HEK293 (cell line): ENCODE measurements at regions of chr6 and their contacts with region 1.

Region 1: DNA sequence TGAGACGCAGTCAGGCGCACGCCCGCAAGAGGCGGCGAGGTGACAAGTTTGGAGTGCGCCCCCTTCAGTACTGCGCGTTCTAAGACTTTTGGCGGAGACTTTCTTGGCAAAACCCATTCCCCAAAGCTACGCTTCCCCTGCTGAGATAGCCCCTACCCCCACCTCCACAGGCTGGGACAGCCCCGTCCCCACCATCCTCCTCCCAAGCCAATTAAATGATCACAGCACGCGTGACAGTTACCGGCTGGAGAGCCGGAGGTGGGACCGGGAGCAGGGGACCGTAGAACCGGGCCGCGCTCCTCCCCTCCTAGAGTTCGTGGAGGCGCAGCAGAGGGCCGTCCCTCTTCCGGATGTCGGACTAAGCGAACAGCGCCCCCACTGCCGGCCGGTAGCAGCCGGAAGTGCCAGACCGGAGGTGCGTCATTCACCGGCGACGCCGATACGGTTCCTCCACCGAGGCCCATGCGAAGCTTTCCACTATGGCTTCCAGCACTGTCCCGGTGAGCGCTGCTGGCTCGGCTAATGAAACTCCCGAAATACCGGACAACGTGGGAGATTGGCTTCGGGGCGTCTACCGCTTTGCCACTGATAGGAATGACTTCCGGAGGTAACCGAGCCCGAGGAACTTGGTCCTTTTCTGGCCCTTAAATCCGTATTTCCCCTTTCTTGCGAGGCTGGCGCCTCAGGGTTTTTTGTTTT is at the start of gene TOMM6:
- H3K4me3 ChIP-seq: peak within 1 kb of the TSS; percentile 67
- H3K27ac ChIP-seq: peak within 1 kb of the TSS; percentile 67
- H3K4me1 ChIP-seq: no peaks in the 10 kb centered on the region; the same call in 1 of the 2 replicates
- CTCF ChIP-seq: peak; percentile 98

Region 2: GRCh38 chr6:41602864-41603608 is 184.3 kb before region 1 on chr6:
- CTCF ChIA-PET with region 1: interaction called, 13 read pairs
- POLR2A ChIA-PET with region 1: no interaction called
- H3K4me3 ChIP-seq: peak overlapping the region; percentile 12
- H3K27ac ChIP-seq: no peak overlapping the region
- H3K4me1 ChIP-seq: no peaks in the 10 kb centered on the region
- CTCF ChIP-seq: peak; percentile 87

Region 3: GRCh38 chr6:41735427-41736356 is 51.7 kb before region 1 on chr6 and contains the start of gene TFEB:
- CTCF ChIA-PET with region 1: interaction called, 34 read pairs
- POLR2A ChIA-PET with region 1: interaction called, 4 read pairs
- H3K4me3 ChIP-seq: peak within 1 kb of the TSS; percentile 58
- H3K27ac ChIP-seq: peak within 1 kb of the TSS; percentile 58; the same call in 1 of the 2 replicates
- H3K4me1 ChIP-seq: 0 out of 2 replicates have a peak, but pooled peaks cover 3% of the 10 kb centered on the region
- CTCF ChIP-seq: peak; percentile 88

Region 4: DNA sequence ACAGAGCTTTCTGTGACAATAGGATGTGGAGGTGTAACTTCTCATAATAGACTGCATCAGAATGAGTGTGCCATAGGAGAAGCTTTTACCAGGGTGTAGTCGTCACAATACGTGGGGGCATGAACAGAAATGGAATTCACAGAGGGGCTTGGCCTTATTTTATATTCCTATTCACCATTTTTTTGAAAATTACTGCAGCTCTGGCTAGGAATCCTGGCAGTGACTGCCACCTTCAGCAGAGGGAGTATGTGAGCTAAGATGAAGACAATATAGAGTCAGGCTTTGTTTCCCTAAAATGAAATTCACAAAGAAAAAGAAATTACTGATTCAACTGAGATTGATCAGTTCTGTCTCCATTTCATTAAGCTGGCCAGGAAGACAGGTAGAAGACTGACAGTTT is 14.0 kb after region 1 on chr6:
- CTCF ChIA-PET with region 1: interaction called, 51 read pairs
- POLR2A ChIA-PET with region 1: interaction called, 4 read pairs
- H3K4me3 ChIP-seq: no peak overlapping the region
- H3K27ac ChIP-seq: no peak overlapping the region
- H3K4me1 ChIP-seq: no peaks in the 10 kb centered on the region
- CTCF ChIP-seq: no peak

Region 5: DNA sequence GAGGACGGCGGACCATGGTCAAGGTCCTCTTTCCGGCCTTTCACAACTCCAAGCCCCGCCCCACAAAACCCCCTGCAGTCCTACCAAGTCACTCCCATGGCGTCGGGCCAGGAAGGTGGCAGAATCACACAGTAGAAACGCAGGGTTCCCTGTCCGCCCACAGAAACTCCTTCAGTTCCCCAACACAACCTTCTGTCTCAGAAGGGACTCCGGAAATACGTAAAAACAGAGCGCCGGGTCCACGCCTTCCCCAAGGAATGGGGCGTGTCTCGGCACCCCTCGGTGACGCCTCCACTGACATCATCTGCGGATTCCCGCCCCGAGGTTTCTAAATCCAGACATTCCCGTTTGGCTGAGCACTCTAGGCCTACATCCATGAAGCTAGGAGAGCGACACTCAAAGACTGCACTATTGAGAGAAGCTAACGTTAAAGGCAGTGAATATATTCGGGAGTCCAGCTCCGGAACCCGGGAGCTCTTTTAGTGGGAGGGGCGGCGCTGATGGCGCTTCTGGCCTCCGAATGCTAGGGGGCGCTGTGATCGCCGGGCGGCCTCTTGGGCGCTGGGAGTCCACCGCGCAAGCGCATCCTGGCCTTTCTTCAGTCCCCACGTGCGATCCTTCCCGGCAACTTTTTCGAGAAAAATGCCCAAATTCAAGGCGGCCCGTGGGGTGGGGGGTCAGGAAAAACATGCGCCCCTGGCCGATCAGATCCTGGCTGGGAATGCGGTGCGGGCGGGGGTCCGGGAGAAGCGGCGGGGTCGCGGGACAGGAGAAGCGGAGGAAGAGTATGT is 133.7 kb after region 1 on chr6 and contains the starts of genes BYSL and MED20:
- CTCF ChIA-PET with region 1: interaction called, 46 read pairs
- POLR2A ChIA-PET with region 1: interaction called, 34 read pairs
- H3K4me3 ChIP-seq: peak within 1 kb of the TSS; percentile 88
- H3K27ac ChIP-seq: peak within 1 kb of the TSS; percentile 80
- H3K4me1 ChIP-seq: peaks cover 9% of the 10 kb centered on the region
- CTCF ChIP-seq: peak; percentile 97

Region 6: GRCh38 chr6:41941280-41942066 is 154.1 kb after region 1 on chr6 and contains the start of gene CCND3:
- CTCF ChIA-PET with region 1: interaction called, 33 read pairs
- POLR2A ChIA-PET with region 1: interaction called, 4 read pairs
- H3K4me3 ChIP-seq: peak within 1 kb of the TSS; percentile 83
- H3K27ac ChIP-seq: peak within 1 kb of the TSS; percentile 51; the same call in 1 of the 2 replicates
- H3K4me1 ChIP-seq: peaks cover 20% of the 10 kb centered on the region
- CTCF ChIP-seq: no peak